ENCODE measurements at regions of chr19 and their contacts with region 1.

Region 1: GRCh38 chr19:35628565-35629331 is at the start of gene RBM42:
- DNase-seq: peak; percentile 96 to 98 (median 97)
- H3K4me3 ChIP-seq: peak within 1 kb of the TSS; percentile 27 to 86
- H3K4me3 Mint-ChIP-seq: peak within 1 kb of the TSS; percentile 97 to 100 (median 98)
- H3K27ac ChIP-seq: peak within 1 kb of the TSS; percentile 88
- H3K27ac Mint-ChIP-seq: peak within 1 kb of the TSS; percentile 95 to 100 (median 100)
- H3K4me1 ChIP-seq: peaks cover 17% of the 10 kb centered on the region
- H3K4me1 Mint-ChIP-seq: peaks cover 13 to 35% (median 19%) of the 10 kb centered on the region in 4 donors
- H3K27me3 ChIP-seq: no peaks in the 10 kb centered on the region
- H3K27me3 Mint-ChIP-seq: peaks cover 0 to 1% of the 10 kb centered on the region in 2 donors
- total RNA-seq, gene RBM42: 53.0 to 55.8 TPM

Region 2: DNA sequence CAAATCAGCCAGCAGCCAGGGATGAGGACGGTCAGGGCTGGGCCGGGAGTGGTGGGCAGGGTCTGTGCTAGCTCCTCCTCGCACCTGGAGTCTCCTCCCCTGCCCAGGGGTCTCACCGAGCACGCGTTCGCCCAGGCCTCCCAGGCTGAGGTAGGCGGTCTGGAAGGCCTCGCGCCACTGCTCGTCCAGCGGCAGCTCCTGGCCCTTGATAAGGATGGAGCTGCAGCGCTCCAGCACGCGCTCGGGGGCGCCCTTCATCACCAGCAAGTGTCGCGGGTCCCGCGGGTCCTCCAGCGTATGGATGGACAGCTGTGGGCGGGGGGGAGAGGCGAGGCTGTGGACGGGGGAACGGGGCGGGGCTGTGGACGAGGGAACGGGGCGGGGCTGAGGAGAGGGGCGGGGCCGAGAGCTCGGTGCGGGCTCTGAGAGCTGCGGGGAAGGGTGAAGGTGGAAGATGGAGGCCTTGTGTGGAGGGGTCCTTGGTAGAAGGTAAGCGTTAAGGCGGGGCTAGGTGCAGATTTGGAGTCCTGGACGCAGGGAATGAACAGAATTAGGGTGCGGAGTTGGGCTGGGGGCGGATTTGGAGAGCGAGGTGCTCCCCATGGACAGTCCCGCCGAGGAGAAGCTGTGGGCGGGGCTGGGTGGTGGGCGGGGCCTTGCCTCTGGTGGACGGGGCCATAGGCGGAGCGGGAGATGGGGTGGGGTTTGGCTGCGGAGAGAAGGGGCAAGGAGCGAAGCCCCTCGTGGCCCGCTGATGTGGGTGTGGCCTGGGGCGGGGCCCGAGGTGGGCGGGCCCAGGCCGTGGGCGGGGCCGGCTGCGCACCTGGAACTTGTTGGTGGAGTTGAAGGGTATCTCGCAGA is 71.0 kb before region 1 on chr19:
- CTCF ChIA-PET with region 1: no interaction called
- POLR2A ChIA-PET with region 1: no interaction called
- intact Hi-C with region 1: no loop called
- DNase-seq: peak; percentile 16 to 54 (median 28)
- H3K4me3 ChIP-seq: peak overlapping the region; percentile 29 to 32
- H3K4me3 Mint-ChIP-seq: peak overlapping the region; percentile 76 to 88 (median 80)
- H3K27ac ChIP-seq: no peak overlapping the region
- H3K27ac Mint-ChIP-seq: peak overlapping the region in 2 of 7 donors; percentile 51 to 68
- H3K4me1 ChIP-seq: peaks cover 12% of the 10 kb centered on the region
- H3K4me1 Mint-ChIP-seq: peaks cover 7 to 19% (median 12%) of the 10 kb centered on the region in 4 donors
- H3K27me3 ChIP-seq: peaks cover 5% of the 10 kb centered on the region
- H3K27me3 Mint-ChIP-seq: peaks cover 23 to 26% of the 10 kb centered on the region in 2 donors

Region 3: DNA sequence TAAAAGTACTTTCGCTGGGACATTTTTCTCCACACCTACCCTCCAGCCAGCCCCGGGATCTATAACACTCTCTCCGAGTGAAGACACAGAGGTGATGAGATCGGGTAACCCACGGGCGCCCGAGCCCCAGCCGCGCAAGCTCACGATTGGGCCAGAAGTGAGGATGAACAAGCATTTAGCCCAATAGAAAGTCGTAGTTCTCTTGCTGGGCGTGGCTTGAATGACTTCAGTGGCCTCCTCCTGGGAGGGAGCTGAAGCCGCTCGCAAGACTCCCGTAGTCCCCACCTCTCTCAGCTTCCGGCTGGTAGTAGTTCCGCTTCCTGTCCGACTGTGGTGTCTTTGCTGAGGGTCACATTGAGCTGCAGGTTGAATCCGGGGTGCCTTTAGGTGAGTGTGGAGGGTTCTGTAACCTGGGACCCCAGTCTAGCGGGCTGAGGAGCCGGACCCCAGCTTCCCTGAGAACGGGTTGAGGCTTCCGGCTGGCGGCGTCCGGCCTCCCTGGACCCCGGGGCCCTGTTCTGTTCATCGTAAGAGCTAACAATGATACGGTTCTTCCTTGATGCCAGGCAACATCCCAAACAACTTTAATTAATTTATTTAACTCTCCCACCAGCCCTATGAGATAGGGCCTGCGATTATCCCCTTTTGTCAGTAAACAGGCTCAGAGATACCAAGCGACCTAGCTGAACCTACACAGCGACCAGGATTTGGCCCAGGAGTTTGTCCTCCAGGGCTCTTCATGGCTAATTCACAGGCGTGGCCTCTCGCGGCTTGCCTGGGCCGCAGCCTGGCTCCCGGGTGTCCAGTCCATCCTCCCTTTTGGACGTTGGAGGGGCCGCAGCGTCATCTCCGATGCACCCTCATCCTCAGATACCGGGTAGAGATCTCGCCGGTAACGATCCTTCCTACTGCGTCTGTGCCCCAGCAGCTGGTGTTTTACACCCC is 19.5 kb after region 1 on chr19 and contains the start of gene COX6B1:
- CTCF ChIA-PET with region 1: interaction called, 3 read pairs
- POLR2A ChIA-PET with region 1: interaction called, 45 read pairs
- intact Hi-C with region 1: loop called (anchors 1 kb)
- DNase-seq: peak; percentile 90 to 98 (median 93)
- H3K4me3 ChIP-seq: peak within 1 kb of the TSS; percentile 72 to 93
- H3K4me3 Mint-ChIP-seq: peak within 1 kb of the TSS; percentile 93 to 99 (median 98)
- H3K27ac ChIP-seq: peak within 1 kb of the TSS; percentile 86
- H3K27ac Mint-ChIP-seq: peak within 1 kb of the TSS; percentile 95 to 99 (median 97)
- H3K4me1 ChIP-seq: peaks cover 41% of the 10 kb centered on the region
- H3K4me1 Mint-ChIP-seq: peaks cover 28 to 52% (median 41%) of the 10 kb centered on the region in 4 donors
- H3K27me3 ChIP-seq: no peaks in the 10 kb centered on the region
- H3K27me3 Mint-ChIP-seq: no peaks in the 10 kb centered on the region
- total RNA-seq, gene COX6B1: 212 to 250 TPM

Region 4: DNA sequence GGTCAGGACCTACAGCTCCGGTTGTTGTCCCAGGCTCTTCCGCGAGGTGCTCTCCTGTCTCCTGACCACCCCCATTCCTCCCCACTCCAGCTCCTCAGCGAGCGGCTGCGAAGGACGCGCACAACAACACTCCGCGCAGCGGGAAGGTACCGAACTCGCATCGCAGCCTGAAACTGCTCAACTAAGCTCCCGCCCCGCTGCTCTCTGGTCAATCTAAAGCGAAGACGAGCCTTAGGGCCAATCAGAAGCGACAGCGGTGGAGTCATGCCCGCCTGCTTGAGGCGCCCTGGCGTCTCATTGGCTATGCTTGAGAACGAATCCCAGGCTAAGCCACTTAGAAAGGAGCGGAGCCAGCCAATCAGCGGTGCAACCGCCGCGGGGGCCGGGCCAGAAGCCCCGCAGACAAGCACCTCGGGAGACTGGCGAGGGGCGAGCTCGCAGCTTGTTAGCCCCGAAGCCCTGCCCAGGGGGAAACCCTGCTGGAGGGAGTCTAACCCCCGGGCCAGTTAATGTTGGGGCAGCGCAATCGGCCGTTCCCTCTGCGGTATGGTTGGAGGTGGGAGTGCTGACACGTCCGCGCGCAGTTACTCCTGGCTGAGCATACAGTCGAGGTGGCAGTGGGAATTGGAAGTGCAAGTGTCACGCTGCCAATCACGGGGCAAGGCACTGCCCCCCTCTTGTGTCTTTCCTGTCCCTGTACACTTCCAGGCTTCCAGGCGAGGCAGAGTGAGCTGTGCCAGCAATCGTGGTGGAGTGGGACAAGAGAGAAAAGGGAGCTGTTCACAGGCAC is 73.7 kb after region 1 on chr19:
- CTCF ChIA-PET with region 1: no interaction called
- POLR2A ChIA-PET with region 1: no interaction called
- intact Hi-C with region 1: no loop called
- DNase-seq: peak; percentile 88 to 97 (median 91)
- H3K4me3 ChIP-seq: peak overlapping the region; percentile 92 to 95
- H3K4me3 Mint-ChIP-seq: peak overlapping the region; percentile 90 to 100 (median 98)
- H3K27ac ChIP-seq: peak overlapping the region; percentile 39
- H3K27ac Mint-ChIP-seq: peak overlapping the region; percentile 90 to 98 (median 95)
- H3K4me1 ChIP-seq: peaks cover 11% of the 10 kb centered on the region
- H3K4me1 Mint-ChIP-seq: peaks cover 3 to 9% (median 7%) of the 10 kb centered on the region in 4 donors
- H3K27me3 ChIP-seq: no peaks in the 10 kb centered on the region
- H3K27me3 Mint-ChIP-seq: peaks cover 2 to 5% of the 10 kb centered on the region in 2 donors

Measured in CD4-positive, alpha-beta memory T cell (primary cell).